Ovary (tissue), 10 donors: ENCODE measurements at regions of chr10 and their contacts with region 1.

Region 1: GRCh38 chr10:22003079-22003913 is at the start of gene DNAJC1:
- DNase-seq: peak; percentile 96 to 99 (median 99)
- H3K4me3 ChIP-seq: peak within 1 kb of the TSS; percentile 88
- H3K27ac ChIP-seq: peak within 1 kb of the TSS; percentile 83 to 93
- H3K4me1 ChIP-seq: peaks cover 1% of the 10 kb centered on the region
- H3K27me3 ChIP-seq: no peaks in the 10 kb centered on the region
- CTCF ChIP-seq: peak in 2 of 3 donors; percentile 14 to 42
- EP300 ChIP-seq: no peak
- POLR2A ChIP-seq: peak; percentile 79
- total RNA-seq, gene DNAJC1: 18.8 to 62.7 (median 21.0) TPM

Region 2: DNA sequence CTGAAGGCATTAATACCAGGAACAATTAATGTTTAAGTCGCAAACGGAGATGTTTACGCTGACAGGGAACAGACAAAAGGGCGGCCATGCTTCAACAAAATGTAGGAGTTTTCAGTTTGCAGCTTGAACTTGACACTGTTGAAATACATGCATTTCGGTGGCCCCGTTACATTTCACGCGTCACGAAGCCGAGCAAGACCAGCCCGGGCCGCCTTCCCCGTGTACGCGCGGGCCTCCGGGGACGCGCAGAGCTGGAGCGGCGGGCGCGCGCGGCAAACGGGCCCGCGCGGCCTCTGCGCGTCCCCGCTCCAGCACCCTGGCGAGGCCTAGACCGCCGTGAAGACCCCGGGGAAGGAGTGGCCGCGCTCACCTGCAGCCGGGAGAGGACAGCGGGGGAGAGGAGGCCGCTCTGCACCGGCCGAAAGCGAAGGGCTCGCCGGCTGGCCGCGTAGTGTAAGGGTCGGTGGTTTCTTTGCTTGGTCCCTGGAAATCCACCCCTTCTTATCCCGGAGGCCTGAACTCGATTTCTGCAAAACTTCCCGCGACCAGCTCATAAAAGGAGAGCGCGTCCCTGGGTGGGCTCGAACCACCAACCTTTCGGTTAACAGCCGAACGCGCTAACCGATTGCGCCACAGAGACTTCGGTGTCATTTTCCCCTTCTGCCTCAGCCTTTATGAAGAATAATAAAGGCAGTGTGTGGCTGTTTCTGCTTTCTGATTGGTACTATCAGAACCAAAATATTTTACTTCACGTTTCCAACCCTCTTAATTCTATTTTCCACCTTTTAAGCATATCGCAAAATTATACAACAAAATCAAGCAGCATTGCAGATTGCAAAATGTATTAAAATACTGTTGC is 225.9 kb after region 1 on chr10:
- intact Hi-C with region 1: loop called in 1 of 4 experiments (anchors 5 kb)
- DNase-seq: peak; percentile 86 to 93 (median 92)
- H3K4me3 ChIP-seq: peak overlapping the region; percentile 58
- H3K27ac ChIP-seq: peak overlapping the region; percentile 86 to 97
- H3K4me1 ChIP-seq: no peaks in the 10 kb centered on the region
- H3K27me3 ChIP-seq: no peaks in the 10 kb centered on the region
- CTCF ChIP-seq: peak in 1 of 3 donors; percentile 3
- EP300 ChIP-seq: no peak
- POLR2A ChIP-seq: no peak

Region 3: GRCh38 chr10:22325272-22326144 is 322.2 kb after region 1 on chr10:
- intact Hi-C with region 1: loop called in 1 of 4 experiments (anchors 10 kb)
- DNase-seq: peak; percentile 78 to 88 (median 86)
- H3K4me3 ChIP-seq: peak overlapping the region; percentile 55
- H3K27ac ChIP-seq: peak overlapping the region; percentile 22 to 33
- H3K4me1 ChIP-seq: peaks cover 3% of the 10 kb centered on the region
- H3K27me3 ChIP-seq: no peaks in the 10 kb centered on the region
- CTCF ChIP-seq: no peak
- EP300 ChIP-seq: no peak
- POLR2A ChIP-seq: no peak

Region 4: GRCh38 chr10:22436884-22437619 is 433.8 kb after region 1 on chr10:
- intact Hi-C with region 1: loop called in 1 of 4 experiments (anchors 10 kb)
- DNase-seq: peak; percentile 89 to 95 (median 92)
- H3K4me3 ChIP-seq: peak overlapping the region; percentile 74
- H3K27ac ChIP-seq: peak overlapping the region; percentile 79 to 96
- H3K4me1 ChIP-seq: peaks cover 5% of the 10 kb centered on the region
- H3K27me3 ChIP-seq: no peaks in the 10 kb centered on the region
- CTCF ChIP-seq: no peak
- EP300 ChIP-seq: no peak
- POLR2A ChIP-seq: peak; percentile 89

Region 5: GRCh38 chr10:22988581-22989360 is 985.5 kb after region 1 on chr10:
- intact Hi-C with region 1: loop called in 2 of 4 experiments (anchors 5 to 10 kb)
- DNase-seq: peak; percentile 12 to 61 (median 40)
- H3K4me3 ChIP-seq: no peak overlapping the region
- H3K27ac ChIP-seq: no peak overlapping the region
- H3K4me1 ChIP-seq: no peaks in the 10 kb centered on the region
- H3K27me3 ChIP-seq: no peaks in the 10 kb centered on the region
- CTCF ChIP-seq: peak; percentile 45 to 77 (median 70)
- EP300 ChIP-seq: no peak
- POLR2A ChIP-seq: no peak